Tibial artery (tissue), 4 donors: ENCODE measurements at regions of chr19 and their contacts with region 1.

Region 1: GRCh38 chr19:34480971-34481821 is at the start of gene WTIP:
- DNase-seq: peak; percentile 67 to 89
- H3K4me3 ChIP-seq: peak within 1 kb of the TSS; percentile 85 to 87
- H3K27ac ChIP-seq: peak within 1 kb of the TSS; percentile 96 to 98
- H3K4me1 ChIP-seq: peaks cover 0 to 54% (median 33%) of the 10 kb centered on the region in 4 donors
- H3K27me3 ChIP-seq: no peaks in the 10 kb centered on the region
- CTCF ChIP-seq: no peak

Region 2: DNA sequence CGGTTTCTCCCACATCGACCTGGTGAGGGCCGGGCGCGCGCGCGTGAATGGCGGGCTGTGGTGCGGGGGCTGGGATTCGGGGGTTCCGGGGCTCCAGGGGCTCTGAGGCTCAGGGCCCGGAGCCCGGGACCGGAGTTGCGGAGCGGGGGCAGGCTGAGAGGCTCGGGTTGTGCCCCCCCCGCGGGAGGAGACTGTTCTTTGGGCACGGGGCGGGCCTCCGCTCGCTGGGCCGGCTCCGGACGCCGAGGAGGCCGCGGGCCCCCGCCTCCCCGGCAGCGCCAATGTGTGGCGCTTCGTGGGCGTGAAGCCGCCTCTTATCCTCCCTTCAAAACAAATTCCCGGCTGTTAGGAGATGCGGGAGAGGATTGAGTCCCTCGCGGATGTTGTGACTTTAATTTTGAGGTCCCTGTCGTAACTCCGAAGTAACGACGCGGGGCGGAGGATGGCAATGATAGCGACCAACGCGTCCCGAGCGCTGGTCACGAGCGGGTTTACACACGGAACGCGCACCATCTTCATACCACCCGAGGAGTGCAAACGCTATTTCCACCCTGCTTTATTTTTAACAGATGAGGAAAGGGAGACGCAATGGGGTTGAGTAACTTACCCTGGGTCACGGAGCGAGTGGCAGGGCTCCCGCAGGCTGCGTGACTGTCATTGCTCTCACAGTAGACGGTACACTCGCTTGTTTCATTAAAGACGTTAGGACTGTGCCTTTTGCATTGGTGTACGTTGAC is 52.5 kb before region 1 on chr19:
- intact Hi-C with region 1: loop called (anchors 5 kb)
- DNase-seq: peak; percentile 51 to 89
- H3K4me3 ChIP-seq: peak overlapping the region; percentile 99 to 100
- H3K27ac ChIP-seq: peak overlapping the region; percentile 98 to 100
- H3K4me1 ChIP-seq: peaks cover 0 to 48% (median 29%) of the 10 kb centered on the region in 4 donors
- H3K27me3 ChIP-seq: no peaks in the 10 kb centered on the region
- CTCF ChIP-seq: no peak

Region 3: DNA sequence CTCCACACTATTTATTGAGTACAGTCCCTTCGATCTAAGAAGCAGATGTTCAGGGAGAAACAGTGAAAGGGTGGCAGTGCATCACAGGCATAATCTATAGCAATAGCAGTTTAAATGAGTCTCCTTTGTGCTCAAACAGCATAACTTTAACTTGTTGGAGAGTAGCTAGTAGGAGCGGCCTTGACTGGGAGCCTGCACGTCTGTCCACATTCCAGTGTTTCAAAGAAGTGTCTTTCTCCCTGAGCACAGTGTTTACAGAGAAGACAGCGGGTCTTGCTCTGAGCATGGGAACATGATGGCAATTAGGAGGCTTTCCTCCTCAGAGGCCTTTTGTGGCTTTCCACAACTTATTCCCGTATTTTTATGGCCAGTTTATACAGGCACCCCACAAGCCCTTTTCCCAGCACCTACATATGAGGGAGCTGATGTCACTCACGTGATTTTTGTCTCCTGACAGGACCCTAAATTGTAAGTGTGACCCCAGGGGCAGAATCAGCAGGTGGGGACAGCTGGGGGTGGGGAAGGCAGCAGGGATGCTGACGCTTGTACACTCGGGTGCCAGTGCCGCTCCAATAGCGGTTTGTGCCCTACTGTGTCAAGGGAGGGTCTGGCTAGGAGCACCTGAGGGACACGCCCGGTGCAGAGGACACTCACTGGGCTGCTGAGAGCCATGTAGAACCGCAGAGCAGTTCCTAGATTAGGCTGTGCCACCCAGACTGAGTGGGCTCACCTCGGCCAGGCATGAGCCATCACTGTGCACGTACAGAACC is 114.3 kb after region 1 on chr19:
- intact Hi-C with region 1: no loop called
- DNase-seq: no peak
- H3K4me3 ChIP-seq: no peak overlapping the region
- H3K27ac ChIP-seq: no peak overlapping the region
- H3K4me1 ChIP-seq: no peaks in the 10 kb centered on the region
- H3K27me3 ChIP-seq: no peaks in the 10 kb centered on the region
- CTCF ChIP-seq: no peak